ENCODE measurements at regions of chr10 and their contacts with region 1.

Region 1: GRCh38 chr10:97210543-97210961 is 24.8 kb upstream of the SLIT1 start:
- DNase-seq: peak; percentile 80
- ATAC-seq: peak; percentile 51
- H3K4me3 ChIP-seq: no peak overlapping the region
- H3K4me3 Mint-ChIP-seq: no peak overlapping the region
- H3K27ac ChIP-seq: no peak overlapping the region
- H3K27ac Mint-ChIP-seq: no peak overlapping the region
- H3K4me1 ChIP-seq: no peaks in the 10 kb centered on the region
- H3K4me1 Mint-ChIP-seq: peaks cover 4% of the 10 kb centered on the region
- H3K27me3 ChIP-seq: peaks cover 0 to 9% (median 1%) of the 10 kb centered on the region in 4 experiments
- H3K27me3 Mint-ChIP-seq: no peaks in the 10 kb centered on the region
- CTCF ChIP-seq: peak; percentile 99

Region 2: GRCh38 chr10:96395931-96396877 is 814.3 kb before region 1 on chr10:
- CTCF ChIA-PET with region 1: interaction called, 38 read pairs
- POLR2A ChIA-PET with region 1: no interaction called
- intact Hi-C with region 1: loop called (anchors 1 kb)
- DNase-seq: peak; percentile 78
- ATAC-seq: peak; percentile 76
- H3K4me3 ChIP-seq: no peak overlapping the region
- H3K4me3 Mint-ChIP-seq: no peak overlapping the region
- H3K27ac ChIP-seq: no peak overlapping the region
- H3K27ac Mint-ChIP-seq: no peak overlapping the region
- H3K4me1 ChIP-seq: peaks cover 0 to 7% of the 10 kb centered on the region in 2 donors
- H3K4me1 Mint-ChIP-seq: peaks cover 1% of the 10 kb centered on the region
- H3K27me3 ChIP-seq: peaks cover 0 to 13% (median 5%) of the 10 kb centered on the region in 4 experiments
- H3K27me3 Mint-ChIP-seq: peaks cover 32% of the 10 kb centered on the region
- CTCF ChIP-seq: peak; percentile 91

Region 3: GRCh38 chr10:97037365-97038361 is 172.9 kb before region 1 on chr10:
- CTCF ChIA-PET with region 1: interaction called, 48 read pairs
- POLR2A ChIA-PET with region 1: no interaction called
- intact Hi-C with region 1: loop called (anchors 1 kb)
- DNase-seq: peak; percentile 83
- ATAC-seq: peak; percentile 97
- H3K4me3 ChIP-seq: peak overlapping the region; percentile 44 to 58 (median 50)
- H3K4me3 Mint-ChIP-seq: peak overlapping the region; percentile 86
- H3K27ac ChIP-seq: no peak overlapping the region
- H3K27ac Mint-ChIP-seq: peak overlapping the region; percentile 62
- H3K4me1 ChIP-seq: peaks cover 7 to 10% of the 10 kb centered on the region in 2 donors
- H3K4me1 Mint-ChIP-seq: peaks cover 18% of the 10 kb centered on the region
- H3K27me3 ChIP-seq: peaks cover 0 to 3% (median 0%) of the 10 kb centered on the region in 4 experiments
- H3K27me3 Mint-ChIP-seq: peaks cover 16% of the 10 kb centered on the region
- CTCF ChIP-seq: peak; percentile 92

Region 4: GRCh38 chr10:97081621-97082235 is 128.8 kb before region 1 on chr10:
- CTCF ChIA-PET with region 1: interaction called, 412 read pairs
- POLR2A ChIA-PET with region 1: no interaction called
- intact Hi-C with region 1: loop called (anchors 2 kb)
- DNase-seq: peak; percentile 67
- ATAC-seq: peak; percentile 36
- H3K4me3 ChIP-seq: no peak overlapping the region
- H3K4me3 Mint-ChIP-seq: no peak overlapping the region
- H3K27ac ChIP-seq: no peak overlapping the region
- H3K27ac Mint-ChIP-seq: no peak overlapping the region
- H3K4me1 ChIP-seq: no peaks in the 10 kb centered on the region
- H3K4me1 Mint-ChIP-seq: no peaks in the 10 kb centered on the region
- H3K27me3 ChIP-seq: peaks cover 0 to 8% (median 4%) of the 10 kb centered on the region in 4 experiments
- H3K27me3 Mint-ChIP-seq: peaks cover 45% of the 10 kb centered on the region
- CTCF ChIP-seq: peak; percentile 66

Region 5: DNA sequence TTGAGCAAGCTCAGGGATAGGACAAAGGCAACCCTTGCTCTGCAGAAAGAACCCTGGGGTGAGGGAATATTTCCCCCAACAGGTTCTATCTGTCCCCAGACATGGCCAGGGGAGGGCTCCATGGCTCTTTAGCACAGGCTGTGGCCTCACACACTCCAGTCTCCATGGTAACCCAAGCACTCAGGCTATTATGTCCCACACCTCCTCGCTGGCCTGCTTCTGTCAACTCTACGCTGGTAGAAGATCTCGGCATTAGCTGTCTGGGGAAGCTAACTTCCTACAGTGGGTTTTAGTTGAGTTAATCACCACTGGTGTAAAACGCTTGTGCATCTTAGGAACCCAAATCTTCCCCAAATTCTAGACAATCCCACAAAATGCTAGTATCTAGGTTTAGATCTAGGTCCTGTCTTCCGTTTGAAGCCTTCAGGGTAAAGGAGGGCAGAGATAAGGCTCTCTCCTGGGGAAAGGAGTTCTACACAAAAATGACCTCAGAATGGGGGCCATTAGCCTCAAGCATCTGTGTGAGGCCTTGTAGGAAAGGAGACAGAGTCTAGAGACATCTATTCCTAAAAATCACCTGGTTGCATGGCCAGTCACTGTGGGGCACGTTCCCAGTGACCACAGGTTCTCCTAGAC is 11.9 kb after region 1 on chr10:
- CTCF ChIA-PET with region 1: interaction called, 22 read pairs
- POLR2A ChIA-PET with region 1: no interaction called
- intact Hi-C with region 1: no loop called
- DNase-seq: no peak
- ATAC-seq: no peak
- H3K4me3 ChIP-seq: no peak overlapping the region
- H3K4me3 Mint-ChIP-seq: no peak overlapping the region
- H3K27ac ChIP-seq: no peak overlapping the region
- H3K27ac Mint-ChIP-seq: no peak overlapping the region
- H3K4me1 ChIP-seq: no peaks in the 10 kb centered on the region
- H3K4me1 Mint-ChIP-seq: no peaks in the 10 kb centered on the region
- H3K27me3 ChIP-seq: no peaks in the 10 kb centered on the region
- H3K27me3 Mint-ChIP-seq: no peaks in the 10 kb centered on the region
- CTCF ChIP-seq: no peak

Region 6: GRCh38 chr10:97270523-97271154 is 60.1 kb after region 1 on chr10:
- CTCF ChIA-PET with region 1: no interaction called
- POLR2A ChIA-PET with region 1: no interaction called
- intact Hi-C with region 1: no loop called
- DNase-seq: no peak
- ATAC-seq: no peak
- H3K4me3 ChIP-seq: no peak overlapping the region
- H3K4me3 Mint-ChIP-seq: no peak overlapping the region
- H3K27ac ChIP-seq: no peak overlapping the region
- H3K27ac Mint-ChIP-seq: no peak overlapping the region
- H3K4me1 ChIP-seq: peaks cover 3 to 4% of the 10 kb centered on the region in 2 donors
- H3K4me1 Mint-ChIP-seq: peaks cover 8% of the 10 kb centered on the region
- H3K27me3 ChIP-seq: no peaks in the 10 kb centered on the region
- H3K27me3 Mint-ChIP-seq: no peaks in the 10 kb centered on the region
- CTCF ChIP-seq: no peak

Region 7: DNA sequence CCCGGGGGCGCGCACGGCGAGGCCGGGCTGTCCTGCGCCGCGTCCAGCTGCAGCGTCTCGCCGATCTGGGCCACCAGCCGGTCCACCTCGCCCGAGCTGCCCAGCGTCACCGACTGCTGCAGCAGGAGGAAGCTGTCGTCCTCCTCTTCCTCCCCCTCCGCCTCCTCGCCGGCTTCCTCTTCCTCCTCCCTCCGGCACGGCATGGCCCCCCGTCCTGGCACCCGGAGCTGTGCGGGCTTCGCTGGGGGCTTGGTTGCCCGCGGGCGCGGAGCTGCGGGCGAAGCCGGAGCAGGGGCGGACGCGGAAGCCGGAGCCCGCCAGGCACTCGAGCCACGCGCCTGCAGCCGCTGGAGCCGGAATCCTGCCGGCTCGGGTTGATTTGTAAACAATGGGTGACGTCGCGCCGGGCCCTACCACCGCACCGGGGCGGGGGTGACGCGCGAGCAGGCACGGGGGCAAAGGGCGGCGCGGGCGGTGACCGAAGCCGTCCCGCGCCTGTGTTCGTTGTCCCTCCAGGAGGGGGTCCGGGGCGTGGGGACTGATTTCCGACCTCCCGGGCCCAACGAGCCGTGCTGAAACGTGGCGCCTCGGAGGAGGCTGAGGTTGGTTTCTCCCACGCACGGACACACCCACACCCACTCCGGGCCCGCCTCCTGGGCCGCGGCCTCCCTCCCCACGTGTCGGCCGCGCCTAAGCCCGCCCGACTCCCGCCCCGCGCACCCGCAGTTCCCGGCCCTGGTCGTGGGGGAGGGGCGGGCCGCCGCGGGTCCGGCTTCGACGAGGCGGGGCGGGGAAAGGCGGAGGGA is 124.0 kb after region 1 on chr10 and contains the start of gene FRAT2:
- CTCF ChIA-PET with region 1: no interaction called
- POLR2A ChIA-PET with region 1: interaction called, 12 read pairs
- intact Hi-C with region 1: no loop called
- DNase-seq: peak; percentile 98
- ATAC-seq: peak; percentile 90
- H3K4me3 ChIP-seq: peak within 1 kb of the TSS; percentile 60 to 86 (median 75)
- H3K4me3 Mint-ChIP-seq: peak within 1 kb of the TSS; percentile 88
- H3K27ac ChIP-seq: peak within 1 kb of the TSS; percentile 93 to 100
- H3K27ac Mint-ChIP-seq: peak within 1 kb of the TSS; percentile 98
- H3K4me1 ChIP-seq: peaks cover 29 to 30% of the 10 kb centered on the region in 2 donors
- H3K4me1 Mint-ChIP-seq: peaks cover 33% of the 10 kb centered on the region
- H3K27me3 ChIP-seq: no peaks in the 10 kb centered on the region
- H3K27me3 Mint-ChIP-seq: no peaks in the 10 kb centered on the region
- CTCF ChIP-seq: no peak
- total RNA-seq, gene FRAT2: 30.2 and 31.5 TPM in 2 replicates